SK-N-SH (cell line): ENCODE measurements at regions of chr13 and their contacts with region 1.

Region 1: DNA sequence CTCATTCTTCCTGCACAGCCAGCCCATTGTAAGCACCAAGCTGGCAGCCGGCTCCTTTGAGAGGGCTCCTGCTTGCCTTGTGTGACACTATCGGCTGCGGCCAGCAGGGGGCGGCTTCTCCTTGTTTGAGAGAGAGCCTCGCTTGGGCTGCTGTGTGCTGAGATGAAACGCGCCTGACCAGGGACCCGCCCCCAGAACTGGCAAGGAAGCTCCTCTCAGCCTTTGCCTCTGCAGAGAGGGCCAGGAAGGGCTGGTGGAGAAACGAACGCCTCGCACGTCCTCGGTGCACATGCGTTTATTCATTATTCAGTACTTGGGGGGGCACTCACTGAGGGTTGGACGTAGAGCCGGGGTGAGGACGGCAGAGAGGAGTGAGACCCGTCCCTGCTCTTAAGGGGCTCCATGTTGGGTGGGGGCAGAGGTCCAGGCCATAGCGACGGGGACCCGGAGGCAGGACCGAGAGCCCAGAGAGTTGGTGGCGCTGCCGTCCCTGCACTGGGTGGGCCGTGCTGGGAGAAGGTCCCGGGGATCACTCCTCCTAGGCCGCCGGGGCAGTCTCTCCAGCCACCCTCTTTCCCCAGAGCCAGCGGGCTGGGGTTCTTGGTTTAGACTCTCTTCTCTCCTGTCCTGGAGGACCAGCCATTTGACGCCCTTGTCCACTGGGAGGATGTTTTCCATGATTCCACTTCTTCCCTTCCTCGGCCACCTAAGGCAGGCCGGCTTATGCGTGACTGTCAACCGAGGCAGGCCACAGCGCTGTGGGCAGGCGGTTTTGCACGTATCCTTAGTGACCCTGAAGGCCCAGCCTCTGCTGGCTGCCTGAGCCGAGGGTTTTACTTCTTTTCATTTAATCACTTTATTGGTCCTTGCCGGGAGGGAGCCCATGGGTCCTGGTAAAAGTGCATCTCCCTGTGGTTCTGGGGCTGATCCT is 174.5 kb downstream of the KATNAL1 start:
- DNase-seq: peak; percentile 91
- H3K4me3 ChIP-seq: peak overlapping the region in 1 of 2 experiments; percentile 28; a peak in 1 of 4 replicates
- H3K27ac ChIP-seq: peak overlapping the region in 1 of 2 experiments; percentile 30; a peak in 1 of 4 replicates
- H3K4me1 ChIP-seq: peaks cover 0 to 15% of the 10 kb centered on the region in 2 experiments; a peak in 2 of 4 replicates
- H3K27me3 ChIP-seq: no peaks in the 10 kb centered on the region
- CTCF ChIP-seq: peak; percentile 92
- EP300 ChIP-seq: 0 out of 4 replicates have a peak, but pooled peaks of 1 of the 2 experiments have one; percentile 14
- RAD21 ChIP-seq: peak; percentile 99

Region 2: GRCh38 chr13:29301027-29301426 is 831.9 kb before region 1 on chr13:
- CTCF ChIA-PET with region 1: no interaction called
- POLR2A ChIA-PET with region 1: no interaction called
- DNase-seq: no peak
- H3K4me3 ChIP-seq: no peak overlapping the region
- H3K27ac ChIP-seq: no peak overlapping the region
- H3K4me1 ChIP-seq: no peaks in the 10 kb centered on the region
- H3K27me3 ChIP-seq: no peaks in the 10 kb centered on the region
- CTCF ChIP-seq: no peak
- EP300 ChIP-seq: no peak
- RAD21 ChIP-seq: no peak

Region 3: DNA sequence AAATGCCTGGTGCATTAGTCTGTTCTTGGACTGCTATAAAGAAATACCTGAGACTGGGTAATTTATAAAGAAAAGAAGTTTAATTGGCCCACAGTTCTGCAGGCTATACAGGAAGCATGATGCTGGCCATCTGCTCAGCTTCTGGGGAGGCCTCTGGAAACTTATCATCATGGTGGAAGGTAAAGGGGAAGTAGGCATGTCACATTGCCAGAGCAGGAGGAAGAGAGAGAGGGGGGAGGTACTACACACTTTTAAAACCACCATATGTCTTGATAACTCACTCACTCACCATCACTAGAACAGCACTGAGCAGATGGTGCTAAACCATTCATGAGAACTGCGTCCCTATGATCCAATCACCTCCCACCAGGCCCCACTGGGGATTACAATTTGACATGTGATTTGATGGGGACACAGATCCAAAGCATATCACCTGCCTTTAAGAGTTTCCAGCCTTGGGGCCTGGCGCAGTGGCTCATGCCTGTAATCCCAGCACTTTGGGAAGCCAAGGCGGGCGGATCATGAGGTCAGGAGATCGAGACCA is 44.5 kb before region 1 on chr13:
- CTCF ChIA-PET with region 1: no interaction called
- POLR2A ChIA-PET with region 1: no interaction called
- DNase-seq: no peak
- H3K4me3 ChIP-seq: no peak overlapping the region
- H3K27ac ChIP-seq: no peak overlapping the region
- H3K4me1 ChIP-seq: no peaks in the 10 kb centered on the region
- H3K27me3 ChIP-seq: no peaks in the 10 kb centered on the region; the same call in 1 of the 2 replicates
- CTCF ChIP-seq: no peak
- EP300 ChIP-seq: no peak
- RAD21 ChIP-seq: no peak

Region 4: GRCh38 chr13:30114571-30115256 is 18.2 kb before region 1 on chr13:
- CTCF ChIA-PET with region 1: interaction called, 42 read pairs
- POLR2A ChIA-PET with region 1: no interaction called
- DNase-seq: peak; percentile 90
- H3K4me3 ChIP-seq: peak overlapping the region; percentile 72 to 77
- H3K27ac ChIP-seq: peak overlapping the region in 1 of 2 experiments; percentile 53; a peak in 1 of 4 replicates
- H3K4me1 ChIP-seq: peaks cover 10 to 22% of the 10 kb centered on the region in 2 experiments; a peak in 3 of 4 replicates
- H3K27me3 ChIP-seq: no peaks in the 10 kb centered on the region
- CTCF ChIP-seq: peak; percentile 93
- EP300 ChIP-seq: no peak
- RAD21 ChIP-seq: peak; percentile 83

Region 5: GRCh38 chr13:30191491-30192100 is 58.7 kb after region 1 on chr13:
- CTCF ChIA-PET with region 1: interaction called, 11 read pairs
- POLR2A ChIA-PET with region 1: no interaction called
- DNase-seq: no peak
- H3K4me3 ChIP-seq: no peak overlapping the region
- H3K27ac ChIP-seq: peak overlapping the region in 1 of 2 experiments; percentile 75; a peak in 2 of 4 replicates
- H3K4me1 ChIP-seq: peaks cover 13 to 40% of the 10 kb centered on the region in 2 experiments; a peak in 3 of 4 replicates
- H3K27me3 ChIP-seq: no peaks in the 10 kb centered on the region
- CTCF ChIP-seq: no peak
- EP300 ChIP-seq: no peak
- RAD21 ChIP-seq: no peak

Region 6: GRCh38 chr13:30334663-30335386 is 201.9 kb after region 1 on chr13:
- CTCF ChIA-PET with region 1: interaction called, 23 read pairs
- POLR2A ChIA-PET with region 1: no interaction called
- DNase-seq: peak; percentile 38
- H3K4me3 ChIP-seq: no peak overlapping the region; a peak in 1 of 4 replicates
- H3K27ac ChIP-seq: no peak overlapping the region
- H3K4me1 ChIP-seq: peaks cover 12 to 15% of the 10 kb centered on the region in 2 experiments
- H3K27me3 ChIP-seq: no peaks in the 10 kb centered on the region
- CTCF ChIP-seq: peak; percentile 59
- EP300 ChIP-seq: no peak
- RAD21 ChIP-seq: peak; percentile 57

Region 7: GRCh38 chr13:30465585-30466357 is 332.9 kb after region 1 on chr13 and contains the start of gene HMGB1:
- CTCF ChIA-PET with region 1: interaction called, 14 read pairs
- POLR2A ChIA-PET with region 1: interaction called, 4 read pairs
- DNase-seq: peak; percentile 88
- H3K4me3 ChIP-seq: peak within 1 kb of the TSS; percentile 68 to 92
- H3K27ac ChIP-seq: peak within 1 kb of the TSS; percentile 97 to 98
- H3K4me1 ChIP-seq: peaks cover 13 to 23% of the 10 kb centered on the region in 2 experiments; a peak in 3 of 4 replicates
- H3K27me3 ChIP-seq: no peaks in the 10 kb centered on the region
- CTCF ChIP-seq: no peak
- EP300 ChIP-seq: no peak
- RAD21 ChIP-seq: no peak
- polyA plus RNA-seq, gene HMGB1: 166 and 193 TPM in 2 replicates

Region 8: GRCh38 chr13:31044377-31045285 is 911.7 kb after region 1 on chr13:
- CTCF ChIA-PET with region 1: interaction called, 11 read pairs
- POLR2A ChIA-PET with region 1: no interaction called
- DNase-seq: peak; percentile 83
- H3K4me3 ChIP-seq: peak overlapping the region in 1 of 2 experiments; percentile 30; a peak in 2 of 4 replicates
- H3K27ac ChIP-seq: peak overlapping the region; percentile 95 to 97
- H3K4me1 ChIP-seq: peaks cover 28 to 35% of the 10 kb centered on the region in 2 experiments
- H3K27me3 ChIP-seq: no peaks in the 10 kb centered on the region
- CTCF ChIP-seq: peak; percentile 94
- EP300 ChIP-seq: no peak
- RAD21 ChIP-seq: peak; percentile 97